Activated T-helper 2 cell treated with anti-CD3 and anti-CD28 coated beads, Interferon-gamma antibody, Interleukin-2, Interleukin-4, amounts not matched to agents 10 μg/mL and 5 μg/mL and 100 μg/mL, durations not matched to agents 14 hours and 24 hours and 36 hours (primary cell): ENCODE measurements at regions of chr19 and their contacts with region 1.

Region 1: GRCh38 chr19:47273313-47273977 is 1.2 kb upstream of the INAFM1 start:
- DNase-seq: peak; percentile 88
- H3K4me3 Mint-ChIP-seq: peak overlapping the region; percentile 87
- H3K27ac Mint-ChIP-seq: peak overlapping the region; percentile 93
- H3K4me1 Mint-ChIP-seq: peaks cover 19% of the 10 kb centered on the region
- H3K27me3 Mint-ChIP-seq: no peaks in the 10 kb centered on the region

Region 2: DNA sequence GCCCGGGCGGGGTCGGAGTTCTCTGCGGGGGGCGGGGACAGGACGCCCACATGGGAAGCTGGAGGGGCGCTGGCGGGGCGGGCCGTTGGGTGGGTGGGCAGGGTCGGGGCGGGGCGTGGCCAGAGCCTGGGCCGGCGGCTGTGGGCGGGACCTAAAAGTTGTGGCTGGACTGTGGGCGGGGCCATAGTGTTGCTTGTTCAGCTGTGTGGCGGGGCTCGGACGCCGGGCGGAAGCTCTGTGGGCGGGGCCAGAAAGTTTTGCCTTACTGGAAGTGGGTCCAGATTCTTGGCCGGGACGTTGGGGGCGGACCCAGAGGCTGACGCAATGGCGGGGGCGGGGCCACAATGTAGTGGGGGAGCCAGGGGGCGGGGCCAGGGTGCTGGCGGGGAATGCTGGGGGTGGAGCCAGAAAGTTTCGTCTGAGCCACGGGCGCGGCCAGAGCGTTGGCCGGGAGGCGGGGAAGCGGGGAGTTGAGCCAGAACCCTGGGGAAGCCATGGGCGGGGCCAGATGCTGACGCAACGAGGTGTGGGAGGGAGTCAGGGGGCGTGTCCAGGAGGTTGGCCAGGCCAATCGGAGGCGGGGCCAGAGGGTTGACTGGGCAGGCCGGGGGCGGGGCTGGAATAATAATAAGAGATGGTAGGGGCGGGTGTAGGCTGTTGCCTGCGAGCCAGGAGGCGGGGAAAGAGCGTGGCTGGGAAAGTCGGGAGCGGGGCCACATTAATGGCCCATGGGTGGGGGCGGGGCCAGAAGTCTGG is 16.6 kb before region 1 on chr19:
- intact Hi-C with region 1: loop called (anchors 1 kb)
- DNase-seq: peak; percentile 99
- H3K4me3 Mint-ChIP-seq: peak overlapping the region; percentile 86
- H3K27ac Mint-ChIP-seq: peak overlapping the region; percentile 87
- H3K4me1 Mint-ChIP-seq: peaks cover 22% of the 10 kb centered on the region
- H3K27me3 Mint-ChIP-seq: no peaks in the 10 kb centered on the region

Region 3: GRCh38 chr19:47305309-47305751 is 31.9 kb after region 1 on chr19:
- intact Hi-C with region 1: no loop called
- DNase-seq: peak; percentile 22
- H3K4me3 Mint-ChIP-seq: no peak overlapping the region
- H3K27ac Mint-ChIP-seq: no peak overlapping the region
- H3K4me1 Mint-ChIP-seq: peaks cover 7% of the 10 kb centered on the region
- H3K27me3 Mint-ChIP-seq: peaks cover 9% of the 10 kb centered on the region

Region 4: DNA sequence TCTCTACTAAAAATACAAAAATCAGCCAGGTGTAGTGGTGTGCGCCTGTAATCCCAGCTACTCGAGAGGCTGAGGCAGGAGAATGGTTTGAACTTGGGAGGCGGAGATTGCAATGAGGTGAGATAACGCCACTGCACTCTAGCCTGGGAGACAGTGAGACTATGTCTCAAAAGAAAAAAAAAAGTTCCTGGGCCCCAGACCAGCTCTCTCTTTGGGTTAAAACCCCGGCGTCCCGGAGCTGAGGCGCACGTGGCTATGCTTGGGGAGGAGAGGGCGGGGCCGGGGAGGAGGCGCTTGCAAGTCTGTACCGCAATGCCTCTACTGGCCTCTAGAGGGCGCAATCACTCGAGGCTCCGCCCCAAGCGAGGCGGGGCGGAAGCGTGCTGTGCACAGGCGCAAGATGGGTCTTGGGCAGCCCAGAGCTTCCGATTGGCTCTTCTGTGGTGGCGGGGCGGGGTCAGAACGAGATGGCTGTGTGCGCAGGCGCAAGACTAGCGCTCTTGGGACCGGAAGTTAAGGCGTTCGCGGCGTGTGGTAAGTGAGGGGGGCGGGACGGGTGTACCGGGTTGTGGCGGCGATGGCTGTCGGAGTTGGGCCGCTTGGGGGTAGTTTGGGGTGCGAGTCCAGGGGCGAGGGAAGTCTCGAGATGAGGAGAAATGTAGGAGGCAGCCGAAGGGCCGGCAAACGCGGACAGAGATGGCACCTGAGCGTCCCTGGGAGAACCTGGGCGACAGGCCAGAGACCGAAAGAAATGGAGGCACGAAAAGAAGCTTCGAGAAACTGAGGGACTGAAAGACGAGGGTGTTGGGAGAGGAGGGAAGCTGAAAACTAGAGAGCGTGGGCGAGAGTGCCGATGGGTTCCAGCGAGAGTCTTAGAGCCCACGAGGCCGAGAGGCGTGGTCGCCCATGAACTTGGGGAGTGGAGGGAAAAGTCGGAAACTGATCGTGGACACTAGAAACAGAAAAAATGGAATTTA is 75.7 kb after region 1 on chr19 and contains the start of gene DHX34:
- intact Hi-C with region 1: loop called (anchors 2 kb)
- DNase-seq: peak; percentile 100
- H3K4me3 Mint-ChIP-seq: peak within 1 kb of the TSS; percentile 91
- H3K27ac Mint-ChIP-seq: peak within 1 kb of the TSS; percentile 91
- H3K4me1 Mint-ChIP-seq: peaks cover 21% of the 10 kb centered on the region
- H3K27me3 Mint-ChIP-seq: no peaks in the 10 kb centered on the region
- total RNA-seq, gene DHX34: 23.2 TPM in 2 replicates

Region 5: GRCh38 chr19:47600246-47601179 is 327.1 kb after region 1 on chr19:
- intact Hi-C with region 1: loop called (anchors 10 kb)
- DNase-seq: peak; percentile 98
- H3K4me3 Mint-ChIP-seq: peak overlapping the region; percentile 94
- H3K27ac Mint-ChIP-seq: peak overlapping the region; percentile 77
- H3K4me1 Mint-ChIP-seq: peaks cover 24% of the 10 kb centered on the region
- H3K27me3 Mint-ChIP-seq: peaks cover 2% of the 10 kb centered on the region